ENCODE measurements at regions of chrX and their contacts with region 1.

Region 1: DNA sequence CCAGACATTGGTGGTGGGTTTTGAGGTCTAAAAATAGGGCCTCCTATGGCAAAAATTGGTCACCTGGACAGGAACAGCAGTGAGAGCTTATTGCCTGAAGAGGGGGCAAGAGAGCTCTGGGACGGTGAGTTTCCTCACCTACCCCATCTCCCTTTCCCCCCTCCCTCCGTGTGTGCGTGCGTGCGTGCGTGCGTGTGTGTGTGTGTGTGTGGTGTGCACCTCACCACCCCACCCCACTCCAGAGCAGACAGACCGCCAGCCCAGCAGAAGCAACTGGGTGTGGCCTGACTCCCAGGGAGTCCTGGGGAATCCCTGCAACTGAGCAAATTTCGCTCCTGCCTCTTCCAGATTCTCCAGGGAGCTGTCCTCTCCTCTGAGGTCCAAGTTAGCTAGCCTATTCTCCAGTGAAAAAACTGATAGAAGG is 44.7 kb downstream of the PRPS1 start:
- DNase-seq: peak; percentile 75
- ATAC-seq: peak; percentile 34 to 64

Region 2: GRCh38 chrX:107710617-107711391 is 37.8 kb after region 1 on chrX:
- intact Hi-C with region 1: loop called (anchors 5 kb)
- DNase-seq: no peak
- ATAC-seq: peak; percentile 76 to 88

Region 3: DNA sequence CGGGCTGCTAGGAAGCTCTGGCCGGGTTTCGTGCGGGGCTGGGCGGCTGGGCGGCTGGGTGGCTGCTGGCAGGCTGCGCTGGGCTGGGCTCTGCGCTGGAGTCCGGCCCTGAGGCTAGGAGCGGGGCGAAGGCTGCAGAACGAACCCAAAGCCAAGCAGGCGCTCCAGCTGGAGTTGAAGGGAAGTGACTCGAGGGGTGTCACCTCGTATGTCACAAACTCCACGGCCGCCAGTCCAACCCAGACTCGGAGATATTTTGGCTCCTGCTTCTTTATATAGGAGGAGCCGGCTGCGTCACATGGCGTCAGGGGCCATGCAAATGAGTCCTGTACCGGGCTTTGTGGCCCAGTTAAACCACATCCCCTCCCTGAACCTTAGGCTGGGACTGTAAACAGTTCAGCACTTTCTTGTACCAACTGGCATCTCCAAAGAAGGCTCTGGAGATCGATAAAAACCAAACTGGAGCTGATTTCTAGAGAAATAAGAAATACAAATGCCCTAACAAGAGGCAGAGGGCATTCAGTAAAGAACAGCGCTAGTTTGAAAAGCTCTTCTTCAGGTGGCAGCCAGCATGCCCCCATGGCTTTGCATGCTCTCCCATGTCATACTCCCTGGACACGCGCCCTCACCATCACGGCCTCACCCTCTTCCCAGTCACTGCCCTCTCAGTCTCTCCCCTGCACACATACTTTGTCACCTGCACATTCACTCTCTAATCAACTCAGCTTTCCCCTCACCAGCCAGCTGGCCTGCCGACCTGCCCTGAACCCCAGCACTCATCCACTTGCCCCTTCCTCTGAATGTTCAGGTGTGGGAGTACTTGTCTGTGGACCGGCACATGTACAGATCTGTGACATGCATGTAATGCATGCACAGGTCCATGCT is 44.1 kb after region 1 on chrX:
- intact Hi-C with region 1: loop called (anchors 5 kb)
- DNase-seq: peak; percentile 88
- ATAC-seq: peak; percentile 74 to 79

Region 4: GRCh38 chrX:107741404-107741790 is 68.4 kb after region 1 on chrX:
- intact Hi-C with region 1: no loop called
- DNase-seq: no peak
- ATAC-seq: no peak